ENCODE measurements at regions of chr4 and their contacts with region 1.

Region 1: GRCh38 chr4:146095091-146095690 is 80.3 kb upstream of the LSM6 start:
- DNase-seq: peak; percentile 61
- H3K4me3 ChIP-seq: no peak overlapping the region
- H3K27ac ChIP-seq: no peak overlapping the region
- H3K4me1 ChIP-seq: no peaks in the 10 kb centered on the region
- H3K27me3 ChIP-seq: peaks cover 4 to 9% of the 10 kb centered on the region in 2 experiments
- CTCF ChIP-seq: peak; percentile 55 to 59
- POLR2A ChIP-seq: no peak

Region 2: DNA sequence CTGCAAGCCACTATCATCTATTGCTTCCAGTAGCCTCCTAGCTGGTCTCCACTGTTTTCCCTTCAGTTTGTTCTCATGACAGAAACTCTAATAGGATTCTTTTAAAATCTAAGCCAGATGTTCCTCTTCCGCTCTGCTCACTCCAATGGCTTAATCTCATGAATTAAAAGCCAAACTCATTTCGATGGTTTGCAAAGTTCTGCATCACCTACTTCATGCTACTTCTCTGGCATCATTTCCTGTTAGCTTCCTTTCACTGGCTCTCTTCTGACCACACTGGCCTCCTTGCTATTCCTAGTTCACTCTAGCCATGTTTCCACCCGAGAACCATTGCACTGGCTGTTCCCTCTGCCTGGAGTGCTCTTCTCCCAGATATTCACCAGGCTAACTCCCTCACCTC is 21.7 kb before region 1 on chr4:
- CTCF ChIA-PET with region 1: interaction called, 19 read pairs
- POLR2A ChIA-PET with region 1: no interaction called
- dilution Hi-C with region 1: no loop called
- intact Hi-C with region 1: no loop called
- DNase-seq: no peak
- H3K4me3 ChIP-seq: no peak overlapping the region
- H3K27ac ChIP-seq: no peak overlapping the region
- H3K4me1 ChIP-seq: no peaks in the 10 kb centered on the region
- H3K27me3 ChIP-seq: peaks cover 0 to 13% of the 10 kb centered on the region in 2 experiments
- CTCF ChIP-seq: no peak
- POLR2A ChIP-seq: no peak

Region 3: DNA sequence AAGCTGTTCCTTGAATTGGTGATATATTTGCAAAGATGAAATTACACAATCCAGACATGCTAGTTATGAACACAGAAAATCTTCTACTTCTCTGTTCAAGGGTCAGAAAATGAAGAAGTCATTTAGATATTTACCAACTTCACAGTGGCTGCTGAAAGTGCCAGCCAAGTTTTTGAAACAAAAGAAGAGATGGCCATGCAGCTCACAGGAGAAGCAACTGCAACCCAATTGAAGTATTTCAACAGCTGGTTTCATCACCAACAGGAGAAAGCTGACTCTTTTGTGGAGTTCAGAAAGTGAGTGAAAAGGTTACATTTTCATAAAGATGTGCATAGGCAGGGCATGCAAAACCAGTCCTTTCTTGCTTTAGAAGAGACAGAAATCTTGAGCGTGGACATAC is 10.3 kb after region 1 on chr4:
- CTCF ChIA-PET with region 1: interaction called, 40 read pairs
- POLR2A ChIA-PET with region 1: no interaction called
- dilution Hi-C with region 1: no loop called
- intact Hi-C with region 1: no loop called
- DNase-seq: no peak
- H3K4me3 ChIP-seq: no peak overlapping the region
- H3K27ac ChIP-seq: no peak overlapping the region
- H3K4me1 ChIP-seq: no peaks in the 10 kb centered on the region
- H3K27me3 ChIP-seq: peaks cover 0 to 4% of the 10 kb centered on the region in 2 experiments
- CTCF ChIP-seq: no peak
- POLR2A ChIP-seq: no peak

Region 4: GRCh38 chr4:146110871-146111485 is 15.8 kb after region 1 on chr4:
- CTCF ChIA-PET with region 1: interaction called, 40 read pairs
- POLR2A ChIA-PET with region 1: no interaction called
- dilution Hi-C with region 1: no loop called
- intact Hi-C with region 1: no loop called
- DNase-seq: no peak
- H3K4me3 ChIP-seq: no peak overlapping the region
- H3K27ac ChIP-seq: no peak overlapping the region
- H3K4me1 ChIP-seq: no peaks in the 10 kb centered on the region
- H3K27me3 ChIP-seq: peaks cover 3 to 4% of the 10 kb centered on the region in 2 experiments
- CTCF ChIP-seq: no peak
- POLR2A ChIP-seq: no peak

Region 5: GRCh38 chr4:146255874-146256273 is 160.7 kb after region 1 on chr4:
- CTCF ChIA-PET with region 1: no interaction called
- POLR2A ChIA-PET with region 1: no interaction called
- dilution Hi-C with region 1: no loop called
- intact Hi-C with region 1: no loop called
- DNase-seq: peak; percentile 36
- H3K4me3 ChIP-seq: no peak overlapping the region
- H3K27ac ChIP-seq: no peak overlapping the region
- H3K4me1 ChIP-seq: peaks cover 2% of the 10 kb centered on the region
- H3K27me3 ChIP-seq: no peaks in the 10 kb centered on the region
- CTCF ChIP-seq: no peak
- POLR2A ChIP-seq: no peak

Region 6: GRCh38 chr4:146333187-146333894 is 238.2 kb after region 1 on chr4:
- CTCF ChIA-PET with region 1: interaction called, 17 read pairs
- POLR2A ChIA-PET with region 1: no interaction called
- dilution Hi-C with region 1: no loop called
- intact Hi-C with region 1: loop called (anchors 5 kb)
- DNase-seq: no peak
- H3K4me3 ChIP-seq: no peak overlapping the region
- H3K27ac ChIP-seq: no peak overlapping the region
- H3K4me1 ChIP-seq: peaks cover 49% of the 10 kb centered on the region
- H3K27me3 ChIP-seq: no peaks in the 10 kb centered on the region
- CTCF ChIP-seq: no peak
- POLR2A ChIP-seq: no peak

Region 7: DNA sequence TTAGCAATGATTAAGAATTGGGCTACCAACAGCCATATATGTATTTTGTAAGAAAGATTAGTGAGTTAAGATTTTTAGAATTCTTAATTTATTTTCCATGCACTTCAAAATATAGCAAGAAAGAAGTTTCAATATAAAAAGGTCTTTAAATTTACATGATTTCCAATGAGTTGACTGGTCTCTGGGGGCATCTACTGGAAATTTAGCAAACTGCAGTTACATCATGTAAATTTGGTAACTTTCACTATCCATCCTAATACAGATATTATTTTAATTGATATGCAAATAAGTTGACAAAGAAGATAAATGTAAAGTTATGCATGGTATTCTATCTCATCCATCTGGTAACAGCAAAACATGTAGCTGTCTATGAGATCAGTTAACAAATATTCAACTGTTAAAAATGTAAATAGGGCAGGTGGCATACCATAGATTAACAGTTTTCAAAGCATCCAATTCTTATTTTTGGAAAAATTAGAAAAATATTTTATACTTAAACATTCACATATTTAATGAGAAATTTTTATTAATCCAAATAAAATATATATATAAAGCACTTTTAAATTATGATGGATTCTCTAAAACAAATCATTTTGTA is 821.4 kb after region 1 on chr4:
- CTCF ChIA-PET with region 1: interaction called, 15 read pairs
- POLR2A ChIA-PET with region 1: no interaction called
- dilution Hi-C with region 1: no loop called
- intact Hi-C with region 1: loop called (anchors 1 kb)
- DNase-seq: peak; percentile 72
- H3K4me3 ChIP-seq: no peak overlapping the region
- H3K27ac ChIP-seq: no peak overlapping the region
- H3K4me1 ChIP-seq: no peaks in the 10 kb centered on the region
- H3K27me3 ChIP-seq: peaks cover 0 to 19% of the 10 kb centered on the region in 2 experiments
- CTCF ChIP-seq: peak; percentile 39 to 49
- POLR2A ChIP-seq: no peak